ENCODE measurements at regions of chr3 and their contacts with region 1.

Region 1: GRCh38 chr3:35137612-35138011 is 501.7 kb upstream of the ARPP21 start:
- ATAC-seq: no peak
- H3K4me3 ChIP-seq: no peak overlapping the region
- H3K27ac ChIP-seq: no peak overlapping the region
- H3K4me1 ChIP-seq: no peaks in the 10 kb centered on the region

Region 2: DNA sequence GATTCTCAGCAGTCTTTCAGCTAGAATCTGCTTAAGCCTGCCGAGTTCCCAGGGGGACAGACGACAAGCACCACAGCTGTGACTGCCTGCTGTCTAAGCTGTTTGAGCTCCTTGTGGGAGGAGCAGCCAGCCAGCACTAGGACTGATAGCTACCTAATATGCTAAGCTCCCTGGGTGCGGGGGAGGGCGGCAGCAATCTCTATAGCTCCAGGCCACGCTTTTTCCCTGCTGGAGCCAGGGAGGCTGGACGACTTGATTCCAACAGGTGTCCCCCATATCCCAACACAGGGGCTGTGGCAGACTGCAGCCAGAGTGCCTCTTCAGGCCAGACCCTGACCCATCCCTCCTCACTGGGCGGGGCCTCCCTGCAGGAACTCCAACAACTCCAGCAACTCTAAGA is 367.6 kb after region 1 on chr3:
- in situ Hi-C with region 1: loop called in 1 of 9 experiments (anchors 25 kb)
- ATAC-seq: peak; percentile 32 to 100 (median 97)
- H3K4me3 ChIP-seq: no peak overlapping the region
- H3K27ac ChIP-seq: peak overlapping the region in 1 of 2 donors; percentile 40
- H3K4me1 ChIP-seq: peaks cover 3 to 10% of the 10 kb centered on the region in 2 donors

Measured in motor neuron (in vitro differentiated cells).